ENCODE measurements at regions of chr22 and their contacts with region 1.

Region 1: DNA sequence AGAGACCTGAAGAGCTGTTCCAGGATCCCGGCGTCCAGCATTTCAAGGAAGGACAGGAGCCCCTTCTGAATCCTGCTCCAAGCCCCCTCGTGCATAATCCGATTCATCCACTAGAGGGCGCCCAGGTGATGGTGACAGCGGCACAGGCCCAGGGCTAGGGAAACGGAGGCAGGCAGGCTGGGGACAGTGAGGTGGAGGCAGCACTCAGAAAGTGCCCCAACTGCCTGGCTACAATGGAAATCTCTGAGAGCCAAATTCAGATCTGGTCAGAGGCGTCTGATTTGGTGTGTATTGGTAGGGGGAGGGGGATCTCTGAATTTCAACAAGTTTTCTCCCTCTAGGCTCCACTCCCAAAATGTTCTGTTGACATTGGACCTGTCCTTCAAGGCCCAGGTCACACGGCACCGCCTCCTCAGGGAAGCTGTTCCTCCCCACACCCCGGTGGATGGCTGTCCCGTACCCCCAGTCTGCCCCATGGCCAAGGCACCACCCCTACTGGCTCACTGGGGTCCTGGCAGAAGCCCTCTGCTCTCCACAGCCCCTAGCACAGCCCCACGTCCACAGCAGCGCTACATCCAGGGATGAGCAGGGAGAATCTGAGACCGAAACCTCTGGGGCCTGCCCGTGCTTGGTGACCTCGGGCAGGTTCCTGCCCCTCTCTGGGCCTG is 142.9 kb downstream of the CRYBB2 start:
- DNase-seq: peak; percentile 67 to 78
- ATAC-seq: peak in 7 of 8 donors; percentile 52 to 75 (median 65)
- H3K4me3 ChIP-seq: no peak overlapping the region
- H3K27ac ChIP-seq: peak overlapping the region in 1 of 10 donors; percentile 9
- H3K4me1 ChIP-seq: peaks cover 23 to 54% (median 36%) of the 10 kb centered on the region in 9 donors
- H3K27me3 ChIP-seq: no peaks in the 10 kb centered on the region
- CTCF ChIP-seq: peak; percentile 79 to 96 (median 88)

Region 2: GRCh38 chr22:24867323-24868022 is 494.9 kb before region 1 on chr22:
- intact Hi-C with region 1: no loop called
- DNase-seq: no peak
- ATAC-seq: peak in 6 of 8 donors; percentile 55 to 93 (median 76)
- H3K4me3 ChIP-seq: no peak overlapping the region
- H3K27ac ChIP-seq: no peak overlapping the region
- H3K4me1 ChIP-seq: peaks cover 0 to 7% (median 4%) of the 10 kb centered on the region in 9 donors
- H3K27me3 ChIP-seq: no peaks in the 10 kb centered on the region
- CTCF ChIP-seq: no peak

Region 3: DNA sequence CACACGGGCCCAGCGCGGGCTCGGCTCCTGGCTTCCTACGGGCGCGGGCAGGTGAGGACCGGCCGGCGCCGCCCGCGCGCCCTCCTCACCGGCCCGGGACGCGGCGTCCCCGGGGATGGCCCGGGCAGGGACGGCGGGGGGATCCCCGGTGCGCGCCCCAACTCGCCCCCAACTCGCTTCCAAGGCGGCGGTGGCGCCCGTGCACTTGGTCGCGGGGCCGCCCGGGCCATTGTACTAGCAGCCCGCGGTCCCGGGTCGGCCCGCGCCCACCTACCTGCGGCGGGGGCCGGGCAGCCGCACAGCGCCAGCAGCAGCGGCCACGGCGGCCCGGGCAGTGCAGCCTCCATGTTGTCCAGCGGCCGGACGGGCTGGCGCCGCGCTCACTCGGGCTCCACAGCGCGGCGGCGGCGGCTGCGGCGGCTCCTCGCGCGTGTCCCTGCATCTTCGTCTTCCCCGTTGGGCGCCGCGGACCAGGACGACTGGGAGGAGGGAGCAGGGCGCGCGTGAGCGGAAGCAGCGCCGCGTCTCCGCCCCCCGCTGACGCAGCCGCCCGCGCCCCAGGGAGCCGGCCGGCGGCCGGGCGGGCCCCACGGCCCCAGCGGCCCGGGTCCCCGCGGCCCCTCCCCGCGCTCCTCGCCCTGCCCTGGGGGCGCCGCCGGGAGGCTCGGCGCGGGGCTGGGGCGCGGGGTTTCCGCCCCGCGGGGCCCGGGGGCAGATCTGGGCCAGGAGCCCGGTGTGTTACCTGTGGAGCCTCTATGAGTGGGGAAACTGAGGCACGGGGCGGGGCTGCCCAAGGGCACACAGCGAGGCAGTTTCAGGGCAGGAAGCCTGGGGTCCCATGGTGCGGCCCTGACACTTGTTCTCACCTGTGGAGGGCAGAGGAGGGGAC is 42.8 kb after region 1 on chr22:
- intact Hi-C with region 1: loop called in 7 of 10 experiments (anchors 5 kb)
- DNase-seq: peak; percentile 80 to 89
- ATAC-seq: peak; percentile 42 to 82 (median 64)
- H3K4me3 ChIP-seq: peak overlapping the region; percentile 49 to 97 (median 74)
- H3K27ac ChIP-seq: peak overlapping the region; percentile 81 to 97 (median 92)
- H3K4me1 ChIP-seq: peaks cover 26 to 53% (median 49%) of the 10 kb centered on the region in 9 donors
- H3K27me3 ChIP-seq: no peaks in the 10 kb centered on the region
- CTCF ChIP-seq: no peak

Region 4: DNA sequence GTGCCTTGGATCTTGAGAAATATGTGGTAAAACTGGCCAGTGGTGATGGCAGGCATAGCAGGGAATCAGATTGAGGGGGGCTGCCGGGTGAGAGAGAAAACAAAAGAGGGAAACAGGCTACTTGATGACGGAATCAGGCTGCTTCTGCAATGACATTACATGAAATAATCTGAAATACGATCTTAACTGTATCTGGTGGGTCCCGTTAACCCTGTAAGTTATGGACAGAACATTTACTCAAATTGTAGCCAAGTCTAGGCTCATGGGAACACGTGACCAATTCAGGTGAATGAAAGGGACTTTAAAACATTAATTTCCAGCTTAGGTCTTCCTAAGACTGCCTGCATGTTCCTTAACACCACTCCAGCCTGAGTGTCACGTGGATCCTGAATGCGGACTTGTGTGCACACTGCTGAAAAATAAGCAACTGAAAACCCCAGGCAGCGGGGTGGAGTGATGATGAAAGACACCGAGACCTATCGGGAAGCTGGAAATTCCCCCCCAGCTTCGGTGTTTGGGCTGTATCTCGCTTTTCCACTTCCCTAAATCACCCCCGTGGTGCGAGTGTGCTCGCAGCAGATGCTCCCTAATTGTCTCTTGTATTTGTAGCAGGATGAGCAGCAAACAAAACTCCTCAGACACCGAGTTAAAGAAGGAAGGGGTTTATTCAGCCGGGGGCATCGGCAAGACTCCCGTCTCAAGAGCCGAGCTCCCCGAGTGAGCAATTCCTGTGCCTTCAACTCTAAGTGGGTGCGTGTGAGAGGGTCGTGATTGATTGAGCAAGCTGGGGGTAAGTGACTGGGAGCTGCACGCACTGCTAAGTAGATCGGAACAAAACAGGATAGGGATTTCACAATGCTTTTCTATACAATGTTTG is 57.1 kb after region 1 on chr22:
- intact Hi-C with region 1: loop called in 4 of 10 experiments (anchors 5 to 10 kb)
- DNase-seq: peak in 1 of 2 donors; percentile 16
- ATAC-seq: peak in 7 of 8 donors; percentile 39 to 72 (median 57)
- H3K4me3 ChIP-seq: peak overlapping the region in 5 of 10 donors; percentile 10 to 53 (median 27)
- H3K27ac ChIP-seq: peak overlapping the region in 1 of 10 donors; percentile 68
- H3K4me1 ChIP-seq: peaks cover 0 to 40% (median 20%) of the 10 kb centered on the region in 9 donors
- H3K27me3 ChIP-seq: peaks cover 16 to 54% (median 46%) of the 10 kb centered on the region in 7 donors
- CTCF ChIP-seq: no peak

Region 5: DNA sequence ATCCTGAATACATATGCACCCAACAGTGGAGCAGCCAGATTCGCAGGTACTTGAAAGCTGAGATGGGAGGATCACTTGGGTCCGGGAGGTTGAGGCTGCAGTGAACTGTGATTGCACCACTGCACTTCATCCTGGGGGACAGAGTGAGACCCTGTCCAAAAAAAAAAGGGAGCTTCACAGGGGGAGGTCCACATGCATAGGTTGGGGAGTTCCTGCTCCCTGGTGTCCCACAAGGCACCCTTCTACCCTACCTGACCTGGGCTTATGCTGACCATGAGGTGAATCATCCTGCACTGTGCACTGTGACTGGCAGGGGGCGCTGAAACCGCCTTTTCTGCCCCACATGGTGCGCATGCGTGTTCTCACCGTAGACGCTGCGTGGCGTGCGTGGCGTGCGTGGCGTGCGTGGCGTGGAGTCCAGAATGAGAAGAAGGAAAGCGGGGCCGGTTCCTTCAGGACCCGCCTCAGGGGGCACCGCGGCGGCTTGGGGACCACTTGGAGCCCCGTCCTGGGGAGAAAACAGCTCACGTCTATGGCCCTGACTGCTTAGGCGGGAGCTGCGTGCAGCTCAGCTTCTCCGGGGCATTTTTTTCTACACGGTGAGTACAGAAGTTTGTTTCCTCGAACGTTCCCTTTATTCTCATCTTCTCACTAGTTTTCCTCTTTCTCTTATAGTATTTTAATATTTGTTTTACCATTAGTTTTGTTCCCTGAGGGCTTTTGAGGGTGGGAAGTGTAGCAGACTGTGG is 85.5 kb after region 1 on chr22:
- intact Hi-C with region 1: loop called in 2 of 10 experiments (anchors 5 kb)
- DNase-seq: peak; percentile 89 to 95
- ATAC-seq: peak; percentile 95 to 97 (median 97)
- H3K4me3 ChIP-seq: peak overlapping the region; percentile 44 to 90 (median 82)
- H3K27ac ChIP-seq: peak overlapping the region in 9 of 10 donors; percentile 52 to 92 (median 84)
- H3K4me1 ChIP-seq: peaks cover 0 to 48% (median 26%) of the 10 kb centered on the region in 9 donors
- H3K27me3 ChIP-seq: no peaks in the 10 kb centered on the region
- CTCF ChIP-seq: peak; percentile 86 to 99 (median 94)

Measured in heart right ventricle (tissue), 16 donors.